ENCODE measurements at regions of chr4 and their contacts with region 1.

Region 1: DNA sequence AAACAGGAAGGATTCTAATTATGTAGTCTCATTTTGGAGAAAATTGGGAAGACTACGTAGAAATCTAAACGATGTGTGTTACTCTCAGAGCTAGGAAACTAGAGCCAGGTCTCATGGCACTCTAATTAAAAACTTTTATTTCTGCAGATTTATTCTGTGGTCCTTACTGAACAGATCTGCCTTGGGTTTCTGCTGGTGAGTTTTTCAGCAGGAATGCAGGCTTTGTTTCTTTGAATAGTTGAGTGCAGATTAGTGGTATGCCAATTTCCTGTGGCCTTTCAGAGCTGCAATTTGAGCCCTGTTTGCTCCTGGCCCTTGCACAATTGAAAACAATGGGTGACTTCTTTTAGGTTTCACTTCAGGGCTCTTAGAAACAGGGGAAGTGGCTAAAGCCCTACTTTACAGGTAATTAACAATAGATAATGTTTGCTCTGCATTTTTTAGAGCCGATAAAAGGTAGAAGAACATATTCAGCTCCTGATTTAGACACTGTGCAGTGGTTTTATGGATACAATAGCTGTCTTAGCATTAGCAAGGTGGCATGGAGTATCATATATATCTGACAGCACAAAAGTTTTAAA is 21.8 kb downstream of the SPRY1 start:
- DNase-seq: no peak

Region 2: DNA sequence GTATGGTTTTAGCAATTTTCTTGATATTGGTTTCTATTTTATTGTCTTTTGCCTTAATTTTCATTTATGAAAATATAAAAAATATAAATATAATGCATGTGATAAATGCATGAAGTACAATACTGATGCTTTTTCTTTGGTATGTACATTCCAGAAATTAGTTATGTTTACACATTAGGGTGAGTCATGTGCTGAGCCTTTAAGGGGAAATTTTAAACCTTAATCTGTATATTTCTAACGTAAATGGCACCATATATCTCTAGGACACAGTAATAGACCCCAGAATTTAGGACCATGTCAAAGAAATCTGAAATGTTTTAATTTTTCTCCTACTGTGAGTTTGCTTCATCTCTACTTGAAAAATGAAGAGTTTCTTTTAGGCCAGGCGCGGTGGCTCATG is 139.7 kb before region 1 on chr4:
- intact Hi-C with region 1: no loop called
- DNase-seq: no peak

Region 3: DNA sequence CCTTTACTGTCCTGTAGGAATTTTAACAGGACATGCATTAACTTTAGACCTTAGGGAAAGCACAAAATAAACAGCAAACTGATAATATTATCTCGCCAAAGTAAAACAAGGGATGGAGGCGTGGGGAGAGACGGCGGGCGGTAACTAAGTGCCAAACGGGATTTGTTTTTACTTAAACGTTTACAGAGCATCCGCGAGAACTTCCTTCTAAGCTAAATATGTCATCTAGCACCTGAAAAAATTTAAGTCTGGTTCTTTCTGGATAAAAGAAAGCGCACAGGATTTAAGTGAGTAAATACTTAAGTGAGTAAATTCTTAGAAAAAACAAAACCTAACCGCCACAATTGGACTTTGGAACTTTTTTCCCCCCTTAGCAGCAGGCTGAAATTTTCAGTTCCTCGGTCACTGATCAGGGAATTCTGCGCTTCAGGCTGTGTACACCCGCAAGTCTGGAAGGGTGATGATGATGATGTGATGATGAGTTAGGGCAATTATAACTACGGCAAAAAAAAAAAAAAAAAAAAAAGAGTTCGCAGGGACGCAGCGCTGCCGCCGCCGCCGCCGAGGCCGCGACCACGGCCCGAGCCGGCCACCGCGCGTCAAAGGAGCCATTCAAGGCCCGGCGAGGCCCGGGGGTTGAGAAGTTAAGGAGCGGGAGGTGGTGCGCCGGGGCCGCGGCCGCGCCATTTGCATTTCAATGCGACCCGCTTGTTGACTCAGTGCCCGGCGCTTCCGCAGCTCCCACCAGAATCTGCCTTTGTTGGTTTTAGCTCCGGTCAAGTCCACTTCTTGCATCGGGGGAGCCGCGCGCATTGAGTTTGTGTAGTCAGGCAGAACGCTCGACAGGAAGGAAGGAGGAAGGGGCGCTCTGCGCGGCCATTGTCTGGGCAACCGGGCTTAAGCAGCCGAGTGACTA is 86.9 kb after region 1 on chr4:
- intact Hi-C with region 1: loop called (anchors 5 kb)
- DNase-seq: peak; percentile 79

Measured in cardiac septum (tissue), 1 donor.